Cardiac septum (tissue), 1 donor: ENCODE measurements at regions of chr4 and their contacts with region 1.

Region 1: DNA sequence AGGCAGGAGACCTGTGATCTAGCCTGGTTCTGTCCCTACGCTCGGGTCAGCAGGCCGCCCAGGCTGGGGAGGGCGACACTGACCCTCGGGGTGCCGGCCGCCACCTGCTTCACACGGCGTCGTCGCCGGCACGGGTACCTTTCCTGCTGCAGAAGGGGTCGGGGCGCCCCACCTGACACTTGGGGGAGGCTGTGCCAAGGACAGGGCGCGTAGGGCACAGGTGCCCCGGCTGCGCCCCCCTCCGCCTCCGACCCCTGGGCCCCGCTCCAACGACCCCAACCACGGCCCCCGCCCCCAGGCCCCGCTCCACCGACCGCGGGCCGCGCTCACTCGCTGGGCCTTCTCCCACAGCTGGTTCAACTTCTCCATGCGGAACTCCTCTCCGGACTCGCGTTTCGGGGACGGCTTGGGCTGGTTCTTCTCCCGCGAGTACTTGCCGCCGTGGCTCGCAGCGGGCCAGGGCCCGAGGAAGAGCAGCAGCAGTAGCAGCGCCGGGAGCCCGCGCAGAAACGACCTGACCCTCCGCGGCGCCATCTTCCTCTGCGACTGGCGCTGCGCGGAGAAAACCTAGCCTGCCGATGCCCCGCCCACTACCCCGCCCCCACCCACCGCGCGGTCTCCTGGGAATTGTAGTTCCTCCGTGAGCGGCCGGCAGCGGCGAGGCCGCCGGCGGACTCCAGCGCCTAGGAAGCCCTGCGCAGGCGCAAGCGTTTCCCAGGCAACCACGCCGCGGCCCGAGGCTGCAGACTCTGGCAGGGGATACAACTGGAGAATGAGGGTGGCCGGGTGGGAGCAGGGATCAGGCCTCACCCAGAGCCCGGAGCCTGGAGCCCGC is at the start of gene LRPAP1:
- DNase-seq: peak; percentile 97
- total RNA-seq, gene LRPAP1: 275 TPM

Region 2: GRCh38 chr4:3369781-3370674 is 162.1 kb before region 1 on chr4:
- intact Hi-C with region 1: loop called (anchors 10 kb)
- DNase-seq: no peak

Region 3: GRCh38 chr4:3420606-3420955 is 111.5 kb before region 1 on chr4:
- intact Hi-C with region 1: no loop called
- DNase-seq: no peak